Heart left ventricle (tissue), 16 donors: ENCODE measurements at regions of chr19 and their contacts with region 1.

Region 1: DNA sequence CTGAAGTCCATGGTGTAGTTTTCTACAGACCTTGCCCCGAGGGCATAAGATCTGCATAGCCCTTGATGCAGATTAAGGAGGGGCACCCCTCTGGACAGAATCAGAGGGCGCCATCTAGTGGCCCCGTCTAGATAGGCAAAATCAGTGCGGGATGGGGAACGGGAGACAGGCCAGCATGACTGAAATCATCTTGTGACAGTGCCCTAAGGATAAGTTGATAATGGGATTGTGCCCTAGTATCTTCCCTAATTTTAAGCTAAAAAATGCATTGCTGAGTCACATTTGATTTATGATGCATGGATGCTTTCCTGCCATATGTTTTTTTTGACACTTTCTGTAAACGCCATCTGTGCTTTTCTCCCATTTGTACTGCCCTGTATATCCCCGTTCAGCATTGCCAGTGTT is 19.0 kb upstream of the GPI start:
- DNase-seq: peak in 3 of 5 donors; percentile 48 to 67 (median 57)
- ATAC-seq: peak; percentile 46 to 83 (median 74)
- H3K4me3 ChIP-seq: no peak overlapping the region
- H3K27ac ChIP-seq: no peak overlapping the region
- H3K4me1 ChIP-seq: peaks cover 0 to 4% (median 0%) of the 10 kb centered on the region in 12 donors
- H3K27me3 ChIP-seq: no peaks in the 10 kb centered on the region
- CTCF ChIP-seq: peak; percentile 63 to 88 (median 77)
- POLR2A ChIP-seq: no peak

Region 2: DNA sequence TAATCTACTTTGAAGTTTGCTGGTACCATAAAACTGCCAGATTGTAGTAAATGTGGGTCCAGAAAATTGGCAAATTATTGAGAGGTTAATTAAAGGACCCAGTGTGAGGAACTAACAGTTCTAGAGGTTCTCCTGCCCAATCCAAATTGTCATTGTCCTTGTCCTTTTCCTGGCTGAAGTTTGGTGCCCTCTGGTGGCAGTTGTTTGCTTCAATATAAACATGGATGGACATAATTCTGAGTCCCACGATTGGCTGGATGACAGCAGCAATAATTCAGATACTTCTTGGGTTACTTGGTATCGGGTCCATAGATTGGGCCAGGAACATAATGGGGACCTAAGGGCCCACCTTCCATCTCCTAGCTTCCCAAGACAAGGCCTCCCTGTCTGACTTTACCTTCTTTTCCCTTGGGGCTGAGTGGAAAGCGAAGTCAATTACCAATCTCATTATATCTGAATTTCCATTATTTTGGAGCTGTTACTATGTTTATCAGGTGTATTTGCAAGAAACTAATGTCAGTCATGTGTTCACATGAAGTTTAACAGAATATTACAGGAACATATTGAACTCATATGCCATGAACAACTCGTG is 125.4 kb before region 1 on chr19:
- intact Hi-C with region 1: loop called in 1 of 10 experiments (anchors 10 kb)
- DNase-seq: peak in 4 of 5 donors; percentile 40 to 66 (median 59)
- ATAC-seq: peak in 3 of 4 donors; percentile 53 to 65 (median 54)
- H3K4me3 ChIP-seq: no peak overlapping the region
- H3K27ac ChIP-seq: no peak overlapping the region
- H3K4me1 ChIP-seq: peaks cover 0 to 32% (median 0%) of the 10 kb centered on the region in 12 donors
- H3K27me3 ChIP-seq: no peaks in the 10 kb centered on the region
- CTCF ChIP-seq: peak; percentile 59 to 81 (median 70)
- POLR2A ChIP-seq: no peak

Region 3: GRCh38 chr19:34232566-34233481 is 113.1 kb before region 1 on chr19:
- intact Hi-C with region 1: loop called in 2 of 10 experiments (anchors 10 kb)
- DNase-seq: peak; percentile 55 to 81 (median 60)
- ATAC-seq: peak; percentile 50 to 83 (median 74)
- H3K4me3 ChIP-seq: peak overlapping the region in 1 of 12 donors; percentile 28
- H3K27ac ChIP-seq: peak overlapping the region in 9 of 12 donors; percentile 6 to 68 (median 40)
- H3K4me1 ChIP-seq: peaks cover 0 to 23% (median 13%) of the 10 kb centered on the region in 12 donors
- H3K27me3 ChIP-seq: no peaks in the 10 kb centered on the region
- CTCF ChIP-seq: no peak
- POLR2A ChIP-seq: no peak

Region 4: GRCh38 chr19:34461375-34462100 is 115.6 kb after region 1 on chr19:
- intact Hi-C with region 1: no loop called
- DNase-seq: no peak
- ATAC-seq: peak; percentile 81 to 91 (median 86)
- H3K4me3 ChIP-seq: no peak overlapping the region
- H3K27ac ChIP-seq: peak overlapping the region; percentile 20 to 89 (median 67)
- H3K4me1 ChIP-seq: peaks cover 0 to 50% (median 32%) of the 10 kb centered on the region in 12 donors
- H3K27me3 ChIP-seq: no peaks in the 10 kb centered on the region
- CTCF ChIP-seq: no peak
- POLR2A ChIP-seq: no peak

Region 5: DNA sequence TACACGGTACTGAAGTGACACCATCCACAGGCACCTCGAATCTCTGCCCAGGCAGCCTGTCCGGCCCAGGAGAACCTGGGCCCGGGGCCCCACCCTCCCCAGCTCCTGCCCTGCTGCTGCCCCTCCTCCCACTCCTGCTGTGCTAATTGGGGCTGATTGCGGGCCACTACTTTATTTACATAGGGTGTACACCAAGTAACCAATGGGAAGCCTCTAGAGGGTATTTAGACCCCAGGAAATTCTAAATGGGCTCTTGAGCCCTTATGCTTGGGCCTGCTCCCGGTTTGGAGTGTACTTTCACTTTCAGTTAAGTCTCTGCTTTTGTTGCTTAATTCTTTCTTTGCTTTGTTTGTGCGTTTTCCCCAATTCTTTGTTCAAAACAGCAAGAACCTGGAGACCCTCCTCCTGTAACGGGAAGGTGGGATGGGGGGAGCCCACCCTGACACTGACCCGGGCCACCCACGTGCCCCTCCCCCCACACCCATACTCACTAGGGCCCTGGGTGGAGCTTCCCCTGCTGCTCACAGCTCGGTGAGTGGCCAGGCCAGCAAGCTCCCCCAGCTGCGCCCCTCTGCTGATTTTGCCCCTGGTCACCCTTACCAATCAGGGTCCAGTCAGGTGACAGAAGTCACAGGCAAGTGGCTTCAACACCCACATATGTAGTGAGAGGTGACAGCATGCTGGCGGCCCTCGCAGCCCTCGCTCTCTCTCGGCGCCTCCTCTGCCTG is 321.6 kb after region 1 on chr19:
- intact Hi-C with region 1: no loop called
- DNase-seq: no peak
- ATAC-seq: peak in 3 of 4 donors; percentile 45 to 52 (median 52)
- H3K4me3 ChIP-seq: peak overlapping the region in 11 of 12 donors; percentile 11 to 52 (median 40)
- H3K27ac ChIP-seq: peak overlapping the region in 8 of 12 donors; percentile 18 to 69 (median 43)
- H3K4me1 ChIP-seq: peaks cover 0 to 29% (median 0%) of the 10 kb centered on the region in 12 donors
- H3K27me3 ChIP-seq: no peaks in the 10 kb centered on the region
- CTCF ChIP-seq: no peak
- POLR2A ChIP-seq: no peak